Heart right ventricle (tissue), 16 donors: ENCODE measurements at regions of chr18 and their contacts with region 1.

Region 1: GRCh38 chr18:7789856-7790552 is 222.9 kb downstream of the PTPRM start:
- DNase-seq: no peak
- ATAC-seq: peak in 6 of 8 donors; percentile 34 to 67 (median 60)
- H3K4me3 ChIP-seq: no peak overlapping the region
- H3K27ac ChIP-seq: peak overlapping the region in 5 of 10 donors; percentile 7 to 45 (median 27)
- H3K4me1 ChIP-seq: peaks cover 0 to 48% (median 33%) of the 10 kb centered on the region in 9 donors
- H3K27me3 ChIP-seq: no peaks in the 10 kb centered on the region
- CTCF ChIP-seq: peak; percentile 32 to 67 (median 54)

Region 2: GRCh38 chr18:7755753-7756475 is 34.1 kb before region 1 on chr18:
- intact Hi-C with region 1: no loop called
- DNase-seq: no peak
- ATAC-seq: peak in 7 of 8 donors; percentile 41 to 77 (median 63)
- H3K4me3 ChIP-seq: no peak overlapping the region
- H3K27ac ChIP-seq: peak overlapping the region in 5 of 10 donors; percentile 29 to 59 (median 51)
- H3K4me1 ChIP-seq: peaks cover 8 to 86% (median 72%) of the 10 kb centered on the region in 9 donors
- H3K27me3 ChIP-seq: no peaks in the 10 kb centered on the region
- CTCF ChIP-seq: peak; percentile 19 to 60 (median 44)

Region 3: DNA sequence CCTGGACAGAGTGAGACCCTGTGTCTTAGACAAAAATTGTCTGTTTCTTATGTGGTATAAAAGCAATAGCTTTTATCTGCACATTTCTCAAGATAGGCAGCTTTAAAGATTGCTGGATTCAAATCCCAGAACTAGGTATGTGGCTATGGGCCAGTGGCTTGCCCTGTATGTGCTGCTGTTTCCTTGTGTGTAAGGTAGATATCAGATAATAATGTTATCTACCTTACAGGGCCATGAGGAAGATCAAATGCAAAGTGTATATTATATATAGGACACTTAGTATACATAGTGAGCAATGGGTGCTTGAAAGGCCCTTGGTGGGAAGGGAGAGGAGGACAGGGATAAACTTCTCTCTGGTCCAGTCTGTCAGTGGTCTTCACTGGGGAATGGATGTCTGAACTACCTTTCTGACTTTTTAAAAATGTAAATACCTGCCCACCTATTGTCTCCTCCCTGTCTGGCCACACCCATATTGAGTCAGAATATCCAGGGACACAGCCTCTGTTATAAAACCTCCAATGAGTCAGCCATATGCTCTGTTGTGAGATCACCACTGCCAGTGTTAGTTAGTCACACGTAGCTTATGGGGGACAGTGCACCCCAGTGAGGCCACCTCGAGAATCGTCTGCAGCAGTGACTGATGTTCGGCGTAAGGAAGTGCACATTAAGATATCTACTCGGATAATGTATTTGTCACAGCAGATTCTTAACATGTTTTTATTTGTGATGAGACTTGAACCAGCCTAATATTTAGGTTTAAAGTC is 160.6 kb after region 1 on chr18:
- intact Hi-C with region 1: loop called in 1 of 10 experiments (anchors 10 kb)
- DNase-seq: no peak
- ATAC-seq: peak in 1 of 8 donors; percentile 25
- H3K4me3 ChIP-seq: no peak overlapping the region
- H3K27ac ChIP-seq: no peak overlapping the region
- H3K4me1 ChIP-seq: peaks cover 0 to 46% (median 19%) of the 10 kb centered on the region in 9 donors
- H3K27me3 ChIP-seq: no peaks in the 10 kb centered on the region
- CTCF ChIP-seq: no peak

Region 4: DNA sequence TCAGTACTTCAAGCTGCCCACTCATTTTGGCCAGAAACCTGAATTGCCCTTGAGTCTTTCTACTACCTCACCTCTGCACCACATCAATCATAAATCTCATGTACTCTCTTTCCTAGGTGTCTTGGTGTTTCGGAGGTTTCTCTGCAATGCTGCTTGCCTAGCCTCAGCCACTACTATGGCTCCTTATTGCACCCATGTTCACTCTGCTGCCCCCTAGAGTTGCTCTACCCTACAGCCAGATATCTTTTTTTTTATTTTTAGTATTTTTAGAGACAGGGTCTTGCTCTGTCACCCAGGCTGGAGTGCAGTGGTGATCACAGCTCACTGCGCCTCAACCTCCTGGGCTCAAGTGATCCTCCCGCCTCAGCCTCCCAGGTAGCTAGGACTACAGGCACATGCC is 190.1 kb after region 1 on chr18:
- intact Hi-C with region 1: loop called in 1 of 10 experiments (anchors 10 kb)
- DNase-seq: no peak
- ATAC-seq: no peak
- H3K4me3 ChIP-seq: no peak overlapping the region
- H3K27ac ChIP-seq: no peak overlapping the region
- H3K4me1 ChIP-seq: peaks cover 0 to 46% (median 15%) of the 10 kb centered on the region in 9 donors
- H3K27me3 ChIP-seq: no peaks in the 10 kb centered on the region
- CTCF ChIP-seq: peak in 2 of 9 donors; percentile 5 to 16

Region 5: DNA sequence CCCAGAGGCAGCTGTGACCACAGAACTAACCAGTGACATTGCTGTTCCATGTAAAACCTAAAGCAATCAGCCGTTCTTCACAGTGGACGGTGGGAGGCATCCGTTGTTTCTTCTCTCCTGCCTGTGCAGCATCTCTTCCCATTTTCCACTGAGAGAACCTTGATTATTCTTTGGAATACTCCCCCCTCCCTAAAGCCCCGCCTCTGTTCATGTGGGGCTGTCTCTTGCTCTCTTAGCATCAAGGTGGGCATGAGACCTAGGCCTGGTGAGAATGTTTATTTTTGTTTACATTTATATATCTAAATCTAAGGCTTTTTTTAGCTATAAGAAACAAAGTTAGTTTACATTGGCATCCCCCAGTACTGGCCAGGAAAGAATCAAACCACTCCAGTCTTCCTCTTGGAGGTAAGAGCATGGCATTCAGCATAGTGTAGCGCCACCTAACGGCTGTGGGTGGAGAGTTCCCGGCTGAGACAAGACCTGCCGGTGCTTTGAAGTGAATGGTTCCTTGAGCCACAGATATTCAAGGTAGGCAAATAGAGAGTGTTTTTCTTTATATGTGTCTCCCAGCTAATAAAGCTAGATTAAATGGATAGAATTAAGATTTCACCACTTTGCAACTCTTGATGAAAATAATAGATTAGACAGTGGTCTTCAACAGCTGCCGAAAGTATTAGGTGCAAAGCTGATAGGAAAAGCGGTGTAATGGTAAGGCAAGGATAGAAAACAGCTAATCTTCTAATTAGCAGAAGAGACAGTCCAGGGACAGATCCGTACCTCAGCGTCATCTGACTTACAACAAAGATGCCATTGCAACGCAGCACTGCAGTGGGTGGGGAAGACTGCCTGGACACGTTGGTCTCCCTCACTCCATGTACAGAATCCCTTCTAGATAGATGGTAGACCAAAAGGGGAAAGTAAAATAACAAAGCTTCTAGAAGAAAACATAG is 599.7 kb after region 1 on chr18:
- intact Hi-C with region 1: loop called in 1 of 10 experiments (anchors 10 kb)
- DNase-seq: peak; percentile 59
- ATAC-seq: peak; percentile 81 to 90 (median 84)
- H3K4me3 ChIP-seq: no peak overlapping the region
- H3K27ac ChIP-seq: no peak overlapping the region
- H3K4me1 ChIP-seq: peaks cover 0 to 7% (median 0%) of the 10 kb centered on the region in 9 donors
- H3K27me3 ChIP-seq: no peaks in the 10 kb centered on the region
- CTCF ChIP-seq: peak; percentile 48 to 86 (median 79)